CD8-positive, alpha-beta T cell (primary cell): ENCODE measurements at regions of chr17 and their contacts with region 1.

Region 1: DNA sequence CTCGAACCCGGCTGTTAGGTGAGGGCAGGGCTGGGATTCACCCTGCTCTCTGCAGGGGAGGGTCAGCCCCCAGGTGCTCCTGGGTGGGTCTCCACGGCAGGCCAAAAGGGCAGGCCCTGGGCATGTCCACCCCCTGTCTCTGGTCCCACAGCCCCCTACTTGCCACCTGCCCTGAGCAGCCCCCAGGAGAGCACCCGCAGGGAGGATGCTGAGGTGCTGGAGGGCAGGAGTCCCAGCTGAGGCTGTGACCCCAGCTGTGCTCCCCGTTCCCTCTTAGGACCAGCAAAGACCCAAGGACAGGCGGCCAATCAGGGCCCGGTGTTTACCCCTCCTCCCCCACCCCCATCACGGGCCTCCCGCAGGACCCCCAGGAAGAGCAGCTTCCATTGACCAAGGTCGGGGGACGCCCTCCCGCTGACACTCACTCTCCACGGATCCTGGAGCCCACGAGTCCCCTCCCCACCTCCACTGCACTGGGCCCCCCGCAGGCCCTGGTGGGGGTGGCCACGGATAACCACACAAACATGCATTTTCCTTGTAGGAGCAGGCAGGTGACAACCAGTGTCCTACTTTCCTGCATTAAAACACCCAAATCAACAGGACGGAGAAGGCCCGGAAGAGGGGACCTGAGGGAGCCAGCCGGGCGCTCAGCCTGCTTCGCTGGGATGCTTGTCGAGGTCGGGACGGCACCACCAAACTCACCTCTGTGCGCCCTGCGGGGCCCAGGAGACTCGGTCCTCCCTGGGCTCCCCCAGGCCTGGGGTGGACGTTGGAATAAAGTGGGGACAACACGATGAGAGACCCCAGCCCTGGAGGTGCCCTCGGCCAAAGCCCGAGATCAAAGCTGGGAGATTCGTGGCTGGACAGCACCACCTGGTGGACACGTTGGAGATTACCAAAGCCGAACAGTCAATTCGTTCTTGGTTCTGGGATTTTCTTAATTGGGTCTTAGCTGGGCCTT is 22.5 kb upstream of the ENPP7 start:
- DNase-seq: peak; percentile 26 to 76 (median 65)
- ATAC-seq: peak; percentile 63
- H3K4me3 ChIP-seq: no peak overlapping the region
- H3K4me3 Mint-ChIP-seq: peak overlapping the region; percentile 45
- H3K27ac ChIP-seq: no peak overlapping the region
- H3K27ac Mint-ChIP-seq: no peak overlapping the region
- H3K4me1 ChIP-seq: peaks cover 5% of the 10 kb centered on the region
- H3K4me1 Mint-ChIP-seq: peaks cover 2% of the 10 kb centered on the region
- H3K27me3 ChIP-seq: no peaks in the 10 kb centered on the region
- H3K27me3 Mint-ChIP-seq: peaks cover 6% of the 10 kb centered on the region
- CTCF ChIP-seq: peak; percentile 72

Region 2: GRCh38 chr17:79622122-79622807 is 85.9 kb before region 1 on chr17:
- CTCF ChIA-PET with region 1: no interaction called
- POLR2A ChIA-PET with region 1: no interaction called
- intact Hi-C with region 1: no loop called
- DNase-seq: no peak
- ATAC-seq: no peak
- H3K4me3 ChIP-seq: no peak overlapping the region
- H3K4me3 Mint-ChIP-seq: no peak overlapping the region
- H3K27ac ChIP-seq: no peak overlapping the region
- H3K27ac Mint-ChIP-seq: no peak overlapping the region
- H3K4me1 ChIP-seq: no peaks in the 10 kb centered on the region
- H3K4me1 Mint-ChIP-seq: no peaks in the 10 kb centered on the region
- H3K27me3 ChIP-seq: no peaks in the 10 kb centered on the region
- H3K27me3 Mint-ChIP-seq: peaks cover 11% of the 10 kb centered on the region
- CTCF ChIP-seq: no peak

Region 3: DNA sequence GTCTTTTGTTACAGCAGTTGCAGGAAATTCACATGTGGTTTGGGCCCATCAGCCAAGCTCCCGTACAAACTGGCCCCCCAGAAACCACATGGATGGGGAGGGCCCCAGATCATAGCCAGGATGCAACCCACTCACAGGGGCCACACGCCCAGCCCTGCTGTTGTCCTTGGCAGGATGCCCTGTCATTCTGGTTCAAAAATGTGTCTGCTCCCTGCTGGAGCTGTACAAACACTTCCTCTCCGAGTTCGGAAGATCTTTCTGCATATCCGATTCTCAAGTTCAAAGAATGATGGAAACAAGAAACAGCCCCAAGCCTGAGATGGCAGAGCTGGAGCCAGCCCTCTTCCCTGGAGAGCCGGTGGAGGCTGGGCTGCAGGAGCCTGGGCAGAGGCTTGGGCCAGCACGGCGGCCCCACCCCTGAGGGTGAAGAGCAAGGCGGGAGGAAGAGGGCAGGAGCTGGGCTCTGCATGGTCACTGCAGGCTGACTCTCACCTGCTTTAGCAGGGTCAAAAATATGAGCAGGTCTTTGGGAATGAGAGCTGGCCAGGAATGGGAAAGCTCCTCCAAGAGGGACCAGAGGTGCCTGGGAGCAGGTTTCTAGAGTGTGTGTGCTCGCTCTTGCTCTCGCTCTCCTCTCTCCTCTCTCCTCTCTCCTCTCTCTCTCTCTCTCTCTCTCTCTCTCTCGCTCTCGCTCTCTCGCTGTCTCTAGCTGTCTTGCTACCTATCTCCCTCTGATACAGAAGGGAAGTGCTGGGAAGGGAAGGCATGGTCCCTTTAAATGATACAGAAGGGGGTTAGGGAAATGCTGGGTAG is 12.2 kb before region 1 on chr17:
- CTCF ChIA-PET with region 1: interaction called, 11 read pairs
- POLR2A ChIA-PET with region 1: no interaction called
- intact Hi-C with region 1: no loop called
- DNase-seq: no peak
- ATAC-seq: no peak
- H3K4me3 ChIP-seq: no peak overlapping the region
- H3K4me3 Mint-ChIP-seq: no peak overlapping the region
- H3K27ac ChIP-seq: no peak overlapping the region
- H3K27ac Mint-ChIP-seq: no peak overlapping the region
- H3K4me1 ChIP-seq: no peaks in the 10 kb centered on the region
- H3K4me1 Mint-ChIP-seq: peaks cover 6% of the 10 kb centered on the region
- H3K27me3 ChIP-seq: peaks cover 0 to 4% of the 10 kb centered on the region in 2 experiments
- H3K27me3 Mint-ChIP-seq: peaks cover 43% of the 10 kb centered on the region
- CTCF ChIP-seq: no peak